Heart left ventricle (tissue), 16 donors: ENCODE measurements at regions of chr1 and their contacts with region 1.

Region 1: DNA sequence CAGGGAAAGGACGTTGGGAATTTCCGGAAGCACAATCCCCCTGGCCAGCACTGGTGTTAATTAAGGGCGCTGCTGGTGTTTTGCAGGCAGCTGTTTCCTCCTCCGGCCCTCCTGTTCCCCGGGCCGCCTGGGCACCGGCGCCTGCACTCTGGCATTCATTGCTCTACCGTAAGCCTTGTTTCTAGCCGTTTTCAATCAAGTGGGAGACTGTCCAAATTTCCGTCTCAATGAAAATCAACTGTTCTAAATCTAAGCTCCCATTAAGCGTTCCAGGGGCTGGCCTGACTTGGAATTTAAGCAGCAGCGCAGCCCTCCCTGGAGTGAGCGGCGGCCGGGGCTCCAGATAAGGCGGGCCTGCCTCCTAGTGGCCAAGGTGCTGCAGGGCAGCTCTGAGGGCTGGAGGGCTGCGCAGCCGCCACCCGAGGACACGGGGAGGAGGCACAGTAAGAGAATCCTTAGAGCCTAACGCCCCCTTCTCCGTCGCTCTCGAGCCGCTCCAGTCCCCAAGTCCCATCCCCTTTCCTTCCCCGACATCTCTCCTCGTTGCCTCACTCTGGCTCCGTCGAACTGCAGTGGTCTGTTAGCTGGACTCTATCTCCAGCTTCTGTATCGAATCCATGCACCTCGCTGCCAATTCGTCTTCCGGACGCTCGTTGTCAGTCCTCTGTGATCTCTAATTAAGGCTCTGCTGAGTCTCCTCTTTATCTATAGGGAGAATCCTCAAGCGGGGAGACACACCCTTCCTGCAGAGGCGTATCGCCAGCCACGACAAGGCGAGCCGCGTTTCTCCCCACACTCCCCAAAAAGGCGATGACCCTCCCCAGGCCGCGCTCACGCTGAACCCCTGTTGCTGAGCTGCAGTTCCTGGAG is 57.8 kb upstream of the LRRC8D start:
- DNase-seq: peak; percentile 89 to 94 (median 91)
- ATAC-seq: peak; percentile 96 to 99 (median 98)
- H3K4me3 ChIP-seq: peak overlapping the region; percentile 12 to 63 (median 50)
- H3K27ac ChIP-seq: peak overlapping the region; percentile 41 to 85 (median 68)
- H3K4me1 ChIP-seq: peaks cover 0 to 56% (median 35%) of the 10 kb centered on the region in 12 donors
- H3K27me3 ChIP-seq: no peaks in the 10 kb centered on the region
- CTCF ChIP-seq: peak; percentile 97 to 100 (median 99)
- POLR2A ChIP-seq: no peak

Region 2: DNA sequence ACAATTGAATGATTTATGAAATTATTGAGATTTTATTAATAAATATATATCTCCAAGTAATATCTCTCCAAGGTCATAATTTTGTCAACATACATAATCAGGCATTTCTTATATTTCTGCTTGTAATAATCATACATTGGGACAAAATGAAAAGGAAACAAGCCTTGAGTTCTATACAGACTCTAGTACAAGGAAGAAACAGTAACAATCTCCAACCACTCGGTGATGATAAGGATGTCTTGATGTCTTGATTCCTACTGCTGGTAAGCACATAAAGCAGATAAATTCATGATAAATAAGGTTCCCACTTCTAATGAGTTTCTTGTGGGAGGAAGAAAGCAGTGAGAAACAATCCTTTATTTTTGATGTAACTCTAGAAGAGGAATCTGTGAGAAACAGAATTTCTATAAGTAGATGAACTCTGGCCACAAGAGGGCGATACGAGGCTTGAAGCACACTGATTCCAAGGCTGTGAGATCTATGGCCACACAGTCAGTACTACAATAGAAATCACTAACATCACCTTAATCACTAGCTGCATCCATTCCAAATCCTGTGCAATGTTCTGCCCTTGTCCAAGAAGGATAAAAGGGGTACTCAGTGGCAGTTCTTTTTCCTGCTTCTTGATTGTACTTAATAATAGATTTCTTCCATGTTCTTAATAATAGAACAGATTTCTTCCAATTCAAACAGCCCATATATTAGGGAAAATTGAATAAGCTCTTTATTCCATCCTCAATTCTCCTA is 279.8 kb before region 1 on chr1:
- intact Hi-C with region 1: loop called (anchors 1 to 5 kb)
- DNase-seq: peak; percentile 64 to 82 (median 76)
- ATAC-seq: peak in 3 of 4 donors; percentile 71 to 85 (median 80)
- H3K4me3 ChIP-seq: no peak overlapping the region
- H3K27ac ChIP-seq: no peak overlapping the region
- H3K4me1 ChIP-seq: no peaks in the 10 kb centered on the region
- H3K27me3 ChIP-seq: no peaks in the 10 kb centered on the region
- CTCF ChIP-seq: peak; percentile 71 to 90 (median 80)
- POLR2A ChIP-seq: no peak

Region 3: GRCh38 chr1:89598450-89599331 is 164.3 kb before region 1 on chr1:
- intact Hi-C with region 1: loop called in 2 of 10 experiments (anchors 2 to 10 kb)
- DNase-seq: no peak
- ATAC-seq: peak in 3 of 4 donors; percentile 68 to 72 (median 69)
- H3K4me3 ChIP-seq: no peak overlapping the region
- H3K27ac ChIP-seq: no peak overlapping the region
- H3K4me1 ChIP-seq: peaks cover 0 to 19% (median 5%) of the 10 kb centered on the region in 12 donors
- H3K27me3 ChIP-seq: no peaks in the 10 kb centered on the region
- CTCF ChIP-seq: peak; percentile 51 to 79 (median 69)
- POLR2A ChIP-seq: no peak

Region 4: GRCh38 chr1:89632657-89633247 is 130.3 kb before region 1 on chr1 and contains the start of gene LRRC8C:
- intact Hi-C with region 1: loop called (anchors 1 to 2 kb)
- DNase-seq: peak; percentile 90 to 97 (median 91)
- ATAC-seq: peak; percentile 76 to 96 (median 92)
- H3K4me3 ChIP-seq: peak within 1 kb of the TSS; percentile 80 to 98 (median 96)
- H3K27ac ChIP-seq: peak within 1 kb of the TSS; percentile 90 to 99 (median 95)
- H3K4me1 ChIP-seq: peaks cover 0 to 72% (median 31%) of the 10 kb centered on the region in 12 donors
- H3K27me3 ChIP-seq: no peaks in the 10 kb centered on the region
- CTCF ChIP-seq: peak in 11 of 12 donors; percentile 20 to 83 (median 67)
- POLR2A ChIP-seq: peak in 1 of 2 donors; percentile 75
- total RNA-seq, gene LRRC8C: 5.6 to 16.3 (median 9.7) TPM

Region 5: GRCh38 chr1:89719502-89720306 is 43.3 kb before region 1 on chr1:
- intact Hi-C with region 1: loop called in 5 of 10 experiments (anchors 5 kb)
- DNase-seq: no peak
- ATAC-seq: no peak
- H3K4me3 ChIP-seq: peak overlapping the region in 1 of 12 donors; percentile 2
- H3K27ac ChIP-seq: peak overlapping the region in 8 of 12 donors; percentile 2 to 81 (median 26)
- H3K4me1 ChIP-seq: peaks cover 3 to 79% (median 33%) of the 10 kb centered on the region in 12 donors
- H3K27me3 ChIP-seq: no peaks in the 10 kb centered on the region
- CTCF ChIP-seq: no peak
- POLR2A ChIP-seq: no peak